Caco-2 (cell line): ENCODE measurements at regions of chr6 and their contacts with region 1.

Region 1: DNA sequence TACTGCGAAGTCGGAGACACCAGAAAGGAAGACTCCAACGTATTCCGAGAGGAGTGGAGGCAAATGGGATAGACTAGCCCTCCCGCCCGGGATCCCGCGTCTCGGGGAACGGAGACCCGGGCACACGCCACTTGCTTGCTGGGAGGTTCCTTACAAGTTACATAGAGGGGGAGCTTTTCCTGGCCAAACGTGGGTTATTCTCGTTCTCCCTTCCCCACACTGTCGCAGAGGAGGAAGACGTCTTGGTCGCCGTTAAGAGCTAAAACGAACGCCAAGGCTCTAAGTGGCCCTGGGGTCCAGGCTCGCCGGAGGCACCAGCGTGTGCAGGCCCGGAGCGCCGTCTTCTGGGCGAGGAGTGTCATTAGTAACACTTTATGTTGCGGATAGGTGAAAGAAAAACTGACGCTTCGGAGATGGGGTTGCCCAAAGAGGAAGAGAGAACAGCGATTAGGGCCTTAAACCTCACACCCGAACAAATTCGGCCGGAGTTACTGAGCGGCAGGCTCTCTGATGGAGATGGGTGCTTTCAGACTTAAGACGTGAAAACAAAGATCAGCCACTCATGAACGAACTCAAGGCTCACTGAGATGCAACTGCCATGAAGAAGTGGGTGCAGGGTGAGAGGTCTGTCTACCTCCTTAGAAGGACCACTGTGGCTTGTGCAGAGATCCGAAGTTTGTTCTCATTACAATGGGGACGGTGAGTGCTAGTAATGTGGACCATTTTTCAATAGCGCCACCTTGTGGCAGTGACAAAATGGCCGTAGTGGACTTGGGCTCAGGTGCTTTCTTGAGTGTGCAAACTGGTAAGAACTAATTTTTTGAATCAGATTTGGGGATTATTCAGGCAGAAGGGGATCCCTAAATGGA is 11.7 kb upstream of the ZNF311 start:
- DNase-seq: peak; percentile 80 to 82
- H3K4me3 ChIP-seq: peak overlapping the region; percentile 53
- H3K4me3 Mint-ChIP-seq: peak overlapping the region; percentile 96
- H3K27ac Mint-ChIP-seq: peak overlapping the region; percentile 41
- H3K4me1 ChIP-seq: peaks cover 3% of the 10 kb centered on the region; the same call in 1 of the 2 replicates
- H3K4me1 Mint-ChIP-seq: peaks cover 6% of the 10 kb centered on the region
- H3K27me3 ChIP-seq: no peaks in the 10 kb centered on the region
- H3K27me3 Mint-ChIP-seq: peaks cover 5% of the 10 kb centered on the region
- CTCF ChIP-seq: peak; percentile 66 to 81

Region 2: GRCh38 chr6:28863604-28864320 is 153.0 kb before region 1 on chr6:
- CTCF ChIA-PET with region 1: interaction called, 7 read pairs
- POLR2A ChIA-PET with region 1: interaction called, 3 read pairs
- intact Hi-C with region 1: loop called (anchors 1 kb)
- DNase-seq: peak; percentile 85 to 87
- H3K4me3 ChIP-seq: peak overlapping the region; percentile 81
- H3K4me3 Mint-ChIP-seq: peak overlapping the region; percentile 79
- H3K27ac Mint-ChIP-seq: peak overlapping the region; percentile 96
- H3K4me1 ChIP-seq: peaks cover 11% of the 10 kb centered on the region
- H3K4me1 Mint-ChIP-seq: peaks cover 20% of the 10 kb centered on the region
- H3K27me3 ChIP-seq: no peaks in the 10 kb centered on the region
- H3K27me3 Mint-ChIP-seq: no peaks in the 10 kb centered on the region
- CTCF ChIP-seq: no peak

Region 3: DNA sequence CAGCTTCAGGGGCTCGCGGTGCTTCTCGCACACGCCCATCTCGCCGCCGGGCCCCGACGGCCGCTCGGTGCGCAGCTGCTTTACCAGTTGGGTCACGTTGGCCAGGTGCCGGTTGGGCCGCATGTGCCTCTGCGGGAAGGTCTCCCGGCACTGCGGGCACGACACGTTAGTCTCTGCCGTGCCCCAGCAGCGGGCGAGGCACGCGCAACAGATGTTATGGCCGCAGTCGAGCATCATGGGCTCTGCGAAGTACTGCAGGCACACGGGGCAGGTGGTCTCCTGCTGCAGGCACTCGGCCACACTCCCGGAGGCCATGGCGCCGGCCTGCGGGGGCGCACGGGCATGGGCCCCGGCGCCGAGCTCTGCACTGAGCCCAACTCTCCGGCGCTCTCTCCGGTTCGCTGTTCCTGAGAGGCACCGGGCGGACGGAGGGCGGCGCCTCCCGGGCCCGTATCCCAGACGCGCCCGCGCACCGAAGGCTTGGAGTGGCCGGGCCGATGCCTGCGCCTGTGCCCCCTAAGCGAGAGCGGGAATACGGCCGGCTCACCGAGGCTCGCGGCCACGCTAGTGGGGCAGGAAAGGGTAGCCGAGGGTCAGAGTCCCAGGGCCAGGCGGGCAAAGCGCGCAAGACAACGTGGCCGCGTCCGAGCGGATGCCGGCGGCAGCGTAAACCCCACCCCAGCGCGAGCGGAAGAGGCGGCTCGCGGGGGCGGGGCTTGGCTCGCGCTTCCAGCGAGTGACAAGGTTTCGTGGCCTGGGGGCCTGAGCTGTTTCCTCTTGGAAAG is 93.3 kb before region 1 on chr6 and contains the start of gene TRIM27:
- CTCF ChIA-PET with region 1: interaction called, 10 read pairs
- POLR2A ChIA-PET with region 1: interaction called, 8 read pairs
- intact Hi-C with region 1: loop called (anchors 5 kb)
- DNase-seq: peak; percentile 89 to 92
- H3K4me3 ChIP-seq: peak within 1 kb of the TSS; percentile 96
- H3K4me3 Mint-ChIP-seq: peak within 1 kb of the TSS; percentile 94
- H3K27ac Mint-ChIP-seq: peak within 1 kb of the TSS; percentile 89
- H3K4me1 ChIP-seq: peaks cover 6% of the 10 kb centered on the region; the same call in 1 of the 2 replicates
- H3K4me1 Mint-ChIP-seq: peaks cover 7% of the 10 kb centered on the region
- H3K27me3 ChIP-seq: no peaks in the 10 kb centered on the region
- H3K27me3 Mint-ChIP-seq: no peaks in the 10 kb centered on the region
- CTCF ChIP-seq: peak in 1 of 2 experiments; percentile 9
- total RNA-seq, gene TRIM27: 47.6 and 48.7 TPM in 2 replicates

Region 4: GRCh38 chr6:28953039-28953584 is 63.7 kb before region 1 on chr6:
- CTCF ChIA-PET with region 1: no interaction called
- POLR2A ChIA-PET with region 1: interaction called, 3 read pairs
- intact Hi-C with region 1: loop called (anchors 2 kb)
- DNase-seq: peak; percentile 65 to 69
- H3K4me3 ChIP-seq: peak overlapping the region; percentile 65
- H3K4me3 Mint-ChIP-seq: peak overlapping the region; percentile 85
- H3K27ac Mint-ChIP-seq: peak overlapping the region; percentile 84
- H3K4me1 ChIP-seq: peaks cover 18% of the 10 kb centered on the region
- H3K4me1 Mint-ChIP-seq: peaks cover 16% of the 10 kb centered on the region
- H3K27me3 ChIP-seq: no peaks in the 10 kb centered on the region
- H3K27me3 Mint-ChIP-seq: peaks cover 3% of the 10 kb centered on the region
- CTCF ChIP-seq: no peak